ENCODE measurements at regions of chr12 and their contacts with region 1.

Region 1: GRCh38 chr12:50055831-50056638 is 1.4 kb upstream of the ASIC1 start:
- DNase-seq: peak; percentile 62
- ATAC-seq: peak; percentile 61

Region 2: GRCh38 chr12:49720214-49720613 is 335.8 kb before region 1 on chr12:
- intact Hi-C with region 1: no loop called
- DNase-seq: no peak
- ATAC-seq: no peak

Region 3: GRCh38 chr12:49825360-49825754 is 230.7 kb before region 1 on chr12:
- intact Hi-C with region 1: no loop called
- DNase-seq: peak; percentile 70
- ATAC-seq: peak; percentile 6

Region 4: GRCh38 chr12:49967042-49967776 is 88.8 kb before region 1 on chr12:
- intact Hi-C with region 1: loop called (anchors 2 kb)
- DNase-seq: peak; percentile 95
- ATAC-seq: peak; percentile 87

Region 5: GRCh38 chr12:50111693-50112455 is 55.8 kb after region 1 on chr12 and contains the start of gene COX14:
- intact Hi-C with region 1: no loop called
- DNase-seq: peak; percentile 99
- ATAC-seq: peak; percentile 87
- total RNA-seq, gene COX14: 243 TPM

Region 6: DNA sequence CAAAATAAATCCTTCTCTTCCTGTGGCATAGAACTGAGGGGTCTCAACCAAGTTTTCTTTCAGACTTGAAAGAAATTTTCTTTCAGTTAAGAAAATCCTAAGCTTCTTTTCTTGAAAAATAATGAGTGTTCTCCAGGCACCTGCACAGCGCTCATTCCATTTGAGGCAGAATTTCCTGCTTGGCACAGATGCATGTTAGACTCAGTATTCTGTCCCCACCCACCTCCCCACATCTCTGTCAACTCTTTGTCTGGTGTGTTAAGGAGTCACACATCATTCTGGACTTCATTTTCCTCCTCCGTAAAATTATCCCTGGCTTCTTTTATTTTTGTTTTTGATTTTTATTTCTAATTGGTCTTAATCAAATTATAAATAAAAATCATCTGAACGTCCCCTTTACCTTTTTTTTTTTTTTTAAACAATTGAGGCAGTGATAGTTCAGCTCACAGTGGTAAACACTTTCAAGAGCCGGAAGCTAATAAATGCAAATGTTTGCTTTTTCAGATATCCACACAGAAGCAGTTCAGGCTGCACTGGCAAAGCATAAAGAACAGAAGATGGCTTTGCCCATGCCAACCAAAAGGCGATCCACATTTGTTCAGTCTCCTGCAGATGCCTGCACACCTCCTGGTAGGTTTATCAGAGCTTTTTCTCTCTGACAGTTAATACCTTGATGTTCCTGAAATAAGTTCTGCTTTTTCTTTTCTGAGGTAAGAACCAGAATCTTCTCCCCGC is 603.8 kb after region 1 on chr12:
- intact Hi-C with region 1: no loop called
- DNase-seq: no peak
- ATAC-seq: no peak

Measured in Right ventricle myocardium superior (tissue), 1 donor.